Dorsolateral prefrontal cortex (tissue), 120 donors: ENCODE measurements at regions of chr6 and their contacts with region 1.

Region 1: GRCh38 chr6:110554966-110555460 is 78.6 kb upstream of the SLC22A16 start:
- DNase-seq: peak in 9 of 10 donors; percentile 71 to 97 (median 85)
- H3K4me3 ChIP-seq: peak overlapping the region in 2 of 59 donors; percentile 6 to 9
- H3K27ac ChIP-seq: peak overlapping the region; percentile 54 to 100 (median 98)
- H3K27me3 ChIP-seq: no peaks in the 10 kb centered on the region
- CTCF ChIP-seq: peak in 2 of 56 donors; percentile 5 to 24

Region 2: GRCh38 chr6:110158479-110158878 is 396.5 kb before region 1 on chr6:
- intact Hi-C with region 1: no loop called
- DNase-seq: no peak
- H3K4me3 ChIP-seq: no peak overlapping the region
- H3K27ac ChIP-seq: no peak overlapping the region
- H3K27me3 ChIP-seq: no peaks in the 10 kb centered on the region
- CTCF ChIP-seq: no peak

Region 3: GRCh38 chr6:110543106-110543505 is 11.9 kb before region 1 on chr6:
- intact Hi-C with region 1: loop called in 1 of 2 experiments (anchors 1 kb)
- DNase-seq: peak in 8 of 10 donors; percentile 58 to 72 (median 67)
- H3K4me3 ChIP-seq: peak overlapping the region in 13 of 59 donors; percentile 4 to 54 (median 45)
- H3K27ac ChIP-seq: peak overlapping the region; percentile 67 to 100 (median 99)
- H3K27me3 ChIP-seq: no peaks in the 10 kb centered on the region
- CTCF ChIP-seq: peak in 17 of 56 donors; percentile 3 to 47 (median 23)

Region 4: DNA sequence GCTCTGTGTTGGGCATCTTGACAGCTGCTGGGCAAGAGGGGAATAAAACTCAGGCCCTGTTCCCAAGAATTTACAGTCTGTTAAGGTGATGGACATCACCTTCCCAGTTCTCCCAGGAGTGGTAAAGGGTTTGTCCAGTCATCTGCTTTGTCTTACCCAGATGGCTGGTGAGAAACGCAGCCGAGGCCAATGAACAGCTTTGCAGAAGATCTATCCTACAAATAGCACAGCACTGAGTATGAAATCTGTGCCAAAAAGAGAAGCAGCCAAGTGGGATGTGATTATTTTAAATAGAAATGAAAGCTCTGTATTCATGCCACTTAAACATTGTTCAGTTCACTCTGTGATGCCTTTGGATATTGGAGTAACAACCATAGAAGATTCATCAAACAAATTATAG is 54.1 kb after region 1 on chr6:
- intact Hi-C with region 1: loop called (anchors 5 kb)
- DNase-seq: peak in 7 of 10 donors; percentile 37 to 72 (median 62)
- H3K4me3 ChIP-seq: peak overlapping the region in 1 of 59 donors; percentile 15
- H3K27ac ChIP-seq: peak overlapping the region; percentile 31 to 98 (median 91)
- H3K27me3 ChIP-seq: no peaks in the 10 kb centered on the region
- CTCF ChIP-seq: no peak

Region 5: DNA sequence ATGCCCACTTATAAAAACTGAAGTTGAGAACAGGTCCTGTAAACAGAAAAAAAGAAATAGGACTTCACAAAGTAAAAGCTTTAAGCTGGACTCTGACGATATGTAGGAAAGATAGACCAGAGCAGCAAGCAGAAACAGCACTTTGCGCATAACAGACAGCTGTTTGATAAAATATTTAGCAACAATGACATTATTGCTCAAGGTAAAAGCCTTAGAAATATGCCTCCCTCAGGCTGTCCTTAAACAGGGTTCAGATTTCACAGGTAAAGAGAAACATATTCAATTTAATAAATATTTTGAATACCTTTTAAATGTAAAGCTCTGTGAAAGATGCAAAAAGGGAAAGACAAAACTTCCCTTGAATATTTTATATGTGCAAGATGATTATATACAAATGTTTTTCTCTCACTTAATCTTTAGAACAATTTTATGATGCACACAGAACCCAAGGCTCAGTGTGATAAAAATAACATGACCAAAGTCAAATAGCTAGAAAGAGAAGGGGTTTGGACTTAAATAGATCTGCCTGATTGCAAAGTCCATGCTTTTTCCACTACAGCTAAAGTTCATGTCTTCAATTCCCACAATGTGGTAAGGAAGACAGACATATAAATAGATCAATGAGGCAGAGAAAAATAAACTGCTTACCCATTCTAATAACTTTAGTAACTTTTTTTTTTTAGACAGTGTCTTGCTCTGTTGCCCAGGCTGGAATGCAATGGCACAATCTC is 116.3 kb after region 1 on chr6:
- intact Hi-C with region 1: loop called in 1 of 2 experiments (anchors 5 kb)
- DNase-seq: no peak
- H3K4me3 ChIP-seq: peak overlapping the region in 5 of 59 donors; percentile 3 to 37 (median 14)
- H3K27ac ChIP-seq: peak overlapping the region in 56 of 59 donors; percentile 16 to 94 (median 72)
- H3K27me3 ChIP-seq: no peaks in the 10 kb centered on the region
- CTCF ChIP-seq: no peak